ENCODE measurements at regions of chr19 and their contacts with region 1.

Region 1: DNA sequence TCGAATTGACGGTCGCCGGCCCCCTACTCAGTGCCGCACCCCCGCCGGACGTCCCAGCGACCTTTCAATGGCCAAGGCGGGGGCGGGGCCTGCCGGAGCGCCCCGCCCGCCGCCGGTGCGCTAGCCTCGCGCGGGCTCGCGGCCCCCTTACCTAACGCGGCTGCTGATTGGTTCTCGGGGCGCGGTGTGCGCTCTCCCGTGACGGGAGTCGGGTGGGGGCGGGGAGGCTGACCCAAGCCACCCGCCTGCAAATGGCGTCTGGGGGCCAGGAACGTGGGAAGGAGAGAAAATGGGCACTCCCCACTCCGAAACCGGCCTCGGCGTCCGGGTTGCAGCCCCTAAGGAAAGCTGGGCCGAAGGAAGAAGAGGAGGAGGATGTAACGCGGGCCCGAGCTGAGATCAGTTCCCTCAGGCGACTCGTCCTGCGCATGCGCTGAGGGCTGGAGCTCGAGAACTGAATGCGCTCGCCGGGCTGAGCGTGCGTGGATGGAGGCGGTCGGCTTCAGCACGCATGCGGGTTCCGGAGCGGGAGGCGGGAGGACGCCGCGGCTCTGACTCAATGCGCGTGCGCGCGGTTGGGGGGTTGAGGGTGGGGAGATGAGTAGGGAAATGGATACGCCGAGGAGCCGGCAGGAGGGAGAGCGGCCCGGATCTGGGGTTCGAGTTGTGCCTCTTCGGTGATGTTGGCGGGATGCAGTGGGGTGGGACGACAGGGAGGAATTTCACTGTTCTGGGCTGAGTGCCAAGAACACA is at the start of gene SMG9:
- DNase-seq: peak; percentile 98
- H3K4me3 Mint-ChIP-seq: peak within 1 kb of the TSS; percentile 99
- H3K27ac Mint-ChIP-seq: peak within 1 kb of the TSS; percentile 100
- H3K4me1 Mint-ChIP-seq: peaks cover 64% of the 10 kb centered on the region
- H3K27me3 Mint-ChIP-seq: no peaks in the 10 kb centered on the region
- total RNA-seq, gene SMG9: 103 to 111 TPM

Region 2: DNA sequence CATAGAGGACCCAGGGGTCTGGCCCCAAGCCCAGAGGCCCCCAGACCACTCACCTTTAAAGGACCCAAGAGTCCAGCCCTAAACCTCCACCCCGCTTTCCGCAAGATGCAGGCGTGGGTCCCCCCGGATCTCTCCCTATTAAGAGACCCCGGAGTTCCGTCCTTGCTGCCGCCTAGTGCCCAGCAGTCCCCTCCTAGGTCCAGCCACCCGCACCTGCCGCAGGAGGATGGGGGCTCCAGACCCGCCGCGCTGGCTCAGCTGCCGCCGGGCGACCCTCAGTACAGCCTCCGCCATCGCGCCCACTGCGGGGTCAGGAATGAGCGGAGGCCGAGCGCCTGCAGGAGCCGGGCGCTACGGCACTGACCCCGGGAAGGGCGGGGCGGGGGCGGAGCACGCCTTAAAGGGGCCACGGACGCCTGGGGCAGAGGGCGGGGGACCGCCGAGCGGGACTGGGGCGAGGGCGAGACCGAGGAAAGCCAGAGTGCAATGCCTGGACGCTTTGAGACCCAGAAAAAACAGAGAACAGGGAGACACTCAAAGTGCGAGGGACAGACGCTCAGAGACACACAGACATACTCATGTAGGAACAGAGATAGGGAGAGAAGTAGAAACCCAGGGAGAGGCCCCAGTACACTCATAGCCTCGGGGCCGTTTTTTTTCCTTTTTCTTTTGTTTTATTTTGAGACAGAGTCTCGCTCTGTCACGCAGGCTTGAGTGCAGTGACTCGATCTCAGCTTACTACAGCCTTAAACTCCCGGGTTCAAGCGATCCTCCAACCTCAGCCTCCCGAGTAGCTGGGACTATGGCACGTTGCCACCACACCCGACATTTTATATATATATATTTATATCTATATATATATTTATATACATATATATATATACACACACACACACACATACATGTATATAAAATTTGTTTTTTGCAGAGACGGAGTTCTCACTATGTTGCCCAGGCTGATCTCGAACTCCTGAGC is 227.5 kb before region 1 on chr19 and contains the start of gene ETHE1:
- CTCF ChIA-PET with region 1: no interaction called
- intact Hi-C with region 1: loop called (anchors 2 kb)
- DNase-seq: peak; percentile 73
- H3K4me3 Mint-ChIP-seq: peak within 1 kb of the TSS; percentile 97
- H3K27ac Mint-ChIP-seq: peak within 1 kb of the TSS; percentile 96
- H3K4me1 Mint-ChIP-seq: peaks cover 22% of the 10 kb centered on the region
- H3K27me3 Mint-ChIP-seq: no peaks in the 10 kb centered on the region
- total RNA-seq, gene ETHE1: 62.1 to 64.4 TPM

Region 3: DNA sequence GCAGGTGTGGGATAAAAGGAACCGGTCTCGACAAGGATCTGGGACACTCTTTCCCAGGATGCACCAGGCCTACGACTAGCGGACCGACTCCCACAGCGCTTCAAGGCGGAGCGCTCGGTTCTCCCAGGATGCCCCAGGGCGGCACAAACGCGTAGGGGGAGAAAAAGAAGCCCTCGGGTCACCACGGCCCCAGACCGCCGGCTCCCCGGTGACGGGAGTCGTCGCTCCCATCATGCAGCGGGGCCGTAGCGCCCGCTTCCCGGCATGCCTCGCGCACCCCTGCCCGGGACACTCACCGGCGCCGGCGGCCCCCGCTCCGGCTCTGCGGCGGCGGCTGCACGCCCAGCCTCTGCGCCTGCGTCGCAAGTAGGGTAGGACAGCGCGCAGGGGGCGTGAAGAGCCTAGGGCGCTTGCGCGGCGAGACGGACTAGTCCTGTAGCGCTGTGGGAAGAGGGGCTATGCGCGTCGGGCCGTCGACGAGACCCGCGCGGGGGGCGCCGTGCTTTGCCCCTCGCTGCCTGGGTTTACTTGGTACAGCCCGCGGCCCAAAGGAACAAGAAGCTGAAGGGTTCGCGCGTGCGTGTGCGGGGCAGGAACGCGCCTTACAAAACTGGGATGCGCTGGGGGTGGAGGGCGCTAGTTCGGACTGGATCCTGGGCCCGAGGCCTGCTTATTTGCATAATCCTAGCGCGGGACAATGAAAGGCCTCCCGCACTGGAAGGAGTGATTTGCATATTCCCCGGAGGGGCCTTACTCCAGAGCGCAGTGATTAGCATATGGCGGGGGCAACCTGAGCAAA is 135.2 kb before region 1 on chr19 and contains the start of gene ZNF428:
- CTCF ChIA-PET with region 1: no interaction called
- intact Hi-C with region 1: loop called (anchors 1 kb)
- DNase-seq: peak; percentile 90
- H3K4me3 Mint-ChIP-seq: peak within 1 kb of the TSS; percentile 94
- H3K27ac Mint-ChIP-seq: peak within 1 kb of the TSS; percentile 96
- H3K4me1 Mint-ChIP-seq: peaks cover 19% of the 10 kb centered on the region
- H3K27me3 Mint-ChIP-seq: no peaks in the 10 kb centered on the region
- total RNA-seq, gene ZNF428: 11.4 to 11.8 TPM

Region 4: DNA sequence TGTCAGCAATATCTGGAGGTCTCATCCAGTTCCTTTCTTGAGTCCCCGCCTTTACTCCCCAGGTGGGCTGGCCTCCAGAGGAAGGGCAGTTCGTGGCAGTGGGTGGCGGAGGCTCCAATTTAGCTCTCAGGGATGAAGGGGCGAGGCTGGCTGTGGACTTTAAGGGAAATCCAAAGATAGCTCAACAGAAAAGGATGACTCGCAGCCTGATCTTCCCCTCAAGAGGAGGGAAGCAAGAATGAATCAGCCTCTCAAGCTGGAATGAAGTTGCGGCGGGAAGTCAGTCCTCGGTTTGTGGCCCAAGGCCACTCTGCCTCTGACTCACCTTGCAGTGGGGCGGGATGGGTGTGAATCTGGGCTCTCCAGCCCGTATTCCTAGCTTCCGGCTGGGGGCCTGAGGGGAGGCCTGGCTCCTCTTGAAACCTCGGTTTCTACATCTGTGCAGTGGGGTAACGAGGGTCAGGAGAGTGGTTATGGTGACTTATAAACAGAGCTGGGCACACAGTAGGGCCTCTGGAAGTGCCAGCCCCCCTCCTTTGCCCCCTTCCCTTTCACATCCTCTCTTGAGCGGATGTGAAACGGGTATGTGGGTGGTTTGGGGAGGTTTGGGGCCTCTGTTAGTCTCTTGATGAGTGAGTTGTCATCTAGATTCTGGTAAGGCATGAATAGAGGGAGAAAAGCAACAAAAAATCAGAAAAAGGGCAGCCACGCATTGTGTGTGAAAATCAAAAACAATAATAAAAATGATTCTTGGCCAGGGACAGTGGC is 10.6 kb after region 1 on chr19:
- CTCF ChIA-PET with region 1: interaction called, 48 read pairs
- intact Hi-C with region 1: loop called (anchors 1 kb)
- DNase-seq: peak; percentile 95
- H3K4me3 Mint-ChIP-seq: peak overlapping the region; percentile 53
- H3K27ac Mint-ChIP-seq: peak overlapping the region; percentile 100
- H3K4me1 Mint-ChIP-seq: peaks cover 80% of the 10 kb centered on the region
- H3K27me3 Mint-ChIP-seq: no peaks in the 10 kb centered on the region

Region 5: GRCh38 chr19:43784981-43785808 is 30.5 kb after region 1 on chr19:
- CTCF ChIA-PET with region 1: interaction called, 8 read pairs
- intact Hi-C with region 1: loop called (anchors 1 kb)
- DNase-seq: peak; percentile 75
- H3K4me3 Mint-ChIP-seq: peak overlapping the region; percentile 66
- H3K27ac Mint-ChIP-seq: peak overlapping the region; percentile 95
- H3K4me1 Mint-ChIP-seq: peaks cover 39% of the 10 kb centered on the region
- H3K27me3 Mint-ChIP-seq: no peaks in the 10 kb centered on the region

Measured in activated naive CD4-positive, alpha-beta T cell treated with anti-CD3 and anti-CD28 coated beads for 36 hours (primary cell).